ENCODE measurements at regions of chr22 and their contacts with region 1.

Region 1: GRCh38 chr22:19432133-19432851 is at the start of gene MRPL40:
- DNase-seq: peak; percentile 86
- H3K4me3 Mint-ChIP-seq: peak within 1 kb of the TSS; percentile 89
- H3K27ac Mint-ChIP-seq: peak within 1 kb of the TSS; percentile 92
- H3K4me1 Mint-ChIP-seq: peaks cover 35% of the 10 kb centered on the region
- H3K27me3 Mint-ChIP-seq: no peaks in the 10 kb centered on the region
- total RNA-seq, gene MRPL40: 32.2 and 34.8 TPM in 2 replicates

Region 2: GRCh38 chr22:19398206-19398605 is 34.1 kb before region 1 on chr22:
- intact Hi-C with region 1: no loop called
- DNase-seq: no peak
- H3K4me3 Mint-ChIP-seq: no peak overlapping the region
- H3K27ac Mint-ChIP-seq: no peak overlapping the region
- H3K4me1 Mint-ChIP-seq: no peaks in the 10 kb centered on the region
- H3K27me3 Mint-ChIP-seq: no peaks in the 10 kb centered on the region

Region 3: GRCh38 chr22:19419464-19420178 is 12.7 kb before region 1 on chr22:
- intact Hi-C with region 1: loop called (anchors 1 kb)
- DNase-seq: peak; percentile 58
- H3K4me3 Mint-ChIP-seq: peak overlapping the region; percentile 37
- H3K27ac Mint-ChIP-seq: peak overlapping the region; percentile 91
- H3K4me1 Mint-ChIP-seq: peaks cover 65% of the 10 kb centered on the region
- H3K27me3 Mint-ChIP-seq: no peaks in the 10 kb centered on the region

Region 4: GRCh38 chr22:19447388-19448075 is 15.2 kb after region 1 on chr22 and contains the start of gene C22orf39:
- intact Hi-C with region 1: loop called (anchors 2 kb)
- DNase-seq: peak; percentile 90
- H3K4me3 Mint-ChIP-seq: peak within 1 kb of the TSS; percentile 99
- H3K27ac Mint-ChIP-seq: peak within 1 kb of the TSS; percentile 90
- H3K4me1 Mint-ChIP-seq: peaks cover 33% of the 10 kb centered on the region
- H3K27me3 Mint-ChIP-seq: no peaks in the 10 kb centered on the region
- total RNA-seq, gene C22orf39: 26.2 and 26.9 TPM in 2 replicates

Region 5: GRCh38 chr22:19641254-19641982 is 209.1 kb after region 1 on chr22:
- intact Hi-C with region 1: no loop called
- DNase-seq: no peak
- H3K4me3 Mint-ChIP-seq: no peak overlapping the region
- H3K27ac Mint-ChIP-seq: no peak overlapping the region
- H3K4me1 Mint-ChIP-seq: no peaks in the 10 kb centered on the region
- H3K27me3 Mint-ChIP-seq: peaks cover 3% of the 10 kb centered on the region

Measured in activated T-helper 2 cell treated with anti-CD3 and anti-CD28 coated beads, Interferon-gamma antibody, Interleukin-2, Interleukin-4, amounts not matched to agents 10 μg/mL and 5 μg/mL and 100 μg/mL, durations not matched to agents 14 hours and 24 hours and 36 hours (primary cell).